Mammary epithelial cell (primary cell): ENCODE measurements at regions of chr16 and their contacts with region 1.

Region 1: DNA sequence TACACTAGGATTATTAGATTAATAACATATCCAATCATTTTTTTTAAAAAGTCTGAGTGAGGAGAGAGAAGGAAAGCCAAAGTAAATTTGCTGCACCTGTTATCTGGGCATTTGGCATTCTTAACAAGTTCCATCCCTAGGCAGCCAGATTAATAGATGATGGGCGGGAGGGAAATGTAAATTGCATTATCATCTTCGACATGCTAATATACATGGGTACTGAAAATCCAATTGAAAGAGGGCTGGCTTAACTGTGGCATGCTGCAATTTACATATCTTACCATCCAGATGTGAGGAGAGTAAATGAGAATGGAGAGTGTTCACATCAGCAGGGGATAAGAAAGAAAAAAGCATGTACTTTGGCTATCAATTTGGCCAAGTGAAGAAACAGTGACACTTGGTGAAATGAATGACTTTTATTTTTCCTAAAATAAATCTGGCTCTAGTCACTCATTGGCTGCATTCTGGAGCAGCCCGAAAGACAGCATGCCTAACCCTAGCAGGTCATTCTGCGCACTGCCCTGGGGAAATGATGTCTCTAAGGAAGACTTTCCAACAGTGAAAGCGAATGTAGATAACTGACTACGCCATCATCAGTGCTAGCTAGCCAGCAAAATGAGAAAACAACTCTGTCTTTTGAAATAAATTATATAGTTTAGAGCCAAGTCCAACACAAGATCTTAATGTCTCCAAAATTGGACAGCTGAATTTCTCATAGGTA is 57.9 kb downstream of the HYDIN start:
- DNase-seq: no peak
- H3K4me3 ChIP-seq: no peak overlapping the region
- H3K27ac ChIP-seq: no peak overlapping the region
- H3K4me1 ChIP-seq: no peaks in the 10 kb centered on the region
- H3K27me3 ChIP-seq: peaks cover 7% of the 10 kb centered on the region
- CTCF ChIP-seq: no peak

Region 2: DNA sequence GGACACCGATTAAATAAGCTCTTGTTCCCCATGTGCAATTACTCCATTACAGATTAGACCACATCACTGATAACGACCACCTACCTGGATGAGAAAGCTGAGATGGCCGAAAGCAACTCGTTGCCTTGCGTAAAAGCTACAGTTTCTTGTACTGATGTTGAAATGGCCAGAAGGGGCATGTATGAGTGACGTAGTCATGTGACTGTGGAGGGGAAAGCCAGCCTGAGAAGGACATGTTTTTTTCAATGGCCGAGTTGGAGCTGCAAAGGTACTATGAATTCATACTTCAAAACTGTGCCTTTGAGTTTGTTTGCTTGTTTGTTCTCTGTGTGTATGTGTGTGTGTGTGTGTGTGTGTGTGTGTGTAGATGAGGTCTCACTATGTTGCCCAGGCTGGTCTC is 74.8 kb after region 1 on chr16:
- CTCF ChIA-PET with region 1: no interaction called
- dilution Hi-C with region 1: no loop called
- in situ Hi-C with region 1: no loop called
- intact Hi-C with region 1: loop called (anchors 2 kb)
- DNase-seq: no peak
- H3K4me3 ChIP-seq: no peak overlapping the region
- H3K27ac ChIP-seq: no peak overlapping the region
- H3K4me1 ChIP-seq: no peaks in the 10 kb centered on the region
- H3K27me3 ChIP-seq: no peaks in the 10 kb centered on the region
- CTCF ChIP-seq: no peak

Region 3: GRCh38 chr16:71260995-71261394 is 88.4 kb after region 1 on chr16:
- CTCF ChIA-PET with region 1: no interaction called
- dilution Hi-C with region 1: no loop called
- in situ Hi-C with region 1: no loop called
- intact Hi-C with region 1: no loop called
- DNase-seq: no peak
- H3K4me3 ChIP-seq: no peak overlapping the region
- H3K27ac ChIP-seq: no peak overlapping the region
- H3K4me1 ChIP-seq: no peaks in the 10 kb centered on the region
- H3K27me3 ChIP-seq: peaks cover 3% of the 10 kb centered on the region
- CTCF ChIP-seq: no peak